HepG2 (cell line): ENCODE measurements at regions of chr14 and their contacts with region 1.

Region 1: GRCh38 chr14:90383075-90383730 is 13.6 kb upstream of the CALM1 start:
- DNase-seq: peak; percentile 98
- ATAC-seq: peak; percentile 92
- H3K4me3 ChIP-seq: peak overlapping the region; percentile 72 to 79 (median 74)
- H3K27ac ChIP-seq: peak overlapping the region; percentile 96
- H3K4me1 ChIP-seq: peaks cover 41% of the 10 kb centered on the region
- H3K27me3 ChIP-seq: no peaks in the 10 kb centered on the region; a peak in 1 of 5 replicates
- CTCF ChIP-seq: peak; percentile 53
- EP300 ChIP-seq: peak; percentile 21 to 25; a peak in 1 of 4 replicates
- POLR2A ChIP-seq: peak; percentile 85 to 94
- RAD21 ChIP-seq: no peak

Region 2: GRCh38 chr14:89954070-89955028 is 428.9 kb before region 1 on chr14 and contains the start of gene EFCAB11:
- CTCF ChIA-PET with region 1: no interaction called
- POLR2A ChIA-PET with region 1: no interaction called
- in situ Hi-C with region 1: no loop called
- intact Hi-C with region 1: loop called (anchors 2 kb)
- DNase-seq: peak; percentile 98
- ATAC-seq: peak; percentile 89
- H3K4me3 ChIP-seq: peak within 1 kb of the TSS; percentile 72 to 95 (median 81)
- H3K27ac ChIP-seq: peak within 1 kb of the TSS; percentile 85
- H3K4me1 ChIP-seq: peaks cover 26% of the 10 kb centered on the region
- H3K27me3 ChIP-seq: no peaks in the 10 kb centered on the region; a peak in 1 of 5 replicates
- CTCF ChIP-seq: no peak
- EP300 ChIP-seq: no peak
- POLR2A ChIP-seq: peak; percentile 87 to 93
- RAD21 ChIP-seq: no peak
- total RNA-seq, gene EFCAB11: 31.5 and 46.5 TPM in 2 replicates

Region 3: DNA sequence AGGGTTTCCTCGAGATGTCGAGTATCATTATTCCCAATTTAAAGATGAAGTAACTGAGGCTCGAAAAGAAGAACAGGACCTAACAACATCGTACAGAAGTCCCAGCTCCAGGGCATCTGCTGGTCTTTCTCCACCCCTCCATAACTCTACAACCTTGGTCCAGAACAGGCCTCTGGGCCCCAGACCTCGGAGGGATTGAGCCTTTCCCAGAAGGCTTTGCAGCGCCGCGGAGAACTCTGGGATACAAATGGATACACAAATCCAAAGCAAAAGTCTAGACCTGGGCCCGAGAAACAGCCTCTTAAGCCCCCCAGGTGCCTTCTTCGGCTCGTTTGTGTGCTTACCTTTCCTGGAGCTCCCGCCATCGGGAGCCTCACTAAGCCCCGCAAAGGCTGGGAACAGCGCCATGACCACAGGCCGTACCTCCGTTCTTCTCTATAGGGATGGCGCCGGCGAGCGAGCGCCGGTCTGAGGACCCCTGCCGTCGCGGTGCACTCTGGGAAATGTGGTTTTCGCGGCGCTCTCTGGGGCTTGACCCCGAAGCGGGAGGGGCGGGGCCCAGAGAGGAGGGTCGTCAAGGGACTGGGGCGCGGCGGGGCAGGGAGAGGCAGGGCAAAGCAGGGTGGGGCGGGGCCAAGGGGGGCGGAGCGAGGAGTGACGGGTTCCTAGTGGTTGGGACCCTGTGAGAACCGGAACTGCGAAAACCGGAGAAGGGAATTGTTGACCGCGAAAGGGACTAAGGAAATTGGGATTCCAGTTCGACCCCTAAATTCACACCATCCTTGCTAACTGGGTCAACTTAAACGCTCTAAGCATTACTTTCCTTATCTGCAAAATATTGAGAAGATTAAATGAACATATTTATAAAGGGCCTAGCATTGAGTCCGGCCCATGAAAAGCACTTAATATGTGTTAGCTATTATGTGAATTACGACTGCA is 51.4 kb before region 1 on chr14 and contains the start of gene NRDE2:
- CTCF ChIA-PET with region 1: no interaction called
- POLR2A ChIA-PET with region 1: interaction called, 5 read pairs
- in situ Hi-C with region 1: no loop called
- intact Hi-C with region 1: loop called (anchors 1 kb)
- DNase-seq: peak; percentile 94
- ATAC-seq: peak; percentile 96
- H3K4me3 ChIP-seq: peak within 1 kb of the TSS; percentile 62 to 93 (median 75)
- H3K27ac ChIP-seq: peak within 1 kb of the TSS; percentile 73
- H3K4me1 ChIP-seq: peaks cover 20% of the 10 kb centered on the region
- H3K27me3 ChIP-seq: no peaks in the 10 kb centered on the region
- CTCF ChIP-seq: peak; percentile 24; the same call in 1 of the 2 replicates
- EP300 ChIP-seq: peak in 1 of 2 experiments; percentile 2; a peak in 1 of 4 replicates
- POLR2A ChIP-seq: peak; percentile 76 to 83
- RAD21 ChIP-seq: no peak; the same call in 1 of the 2 replicates
- total RNA-seq, gene NRDE2: 12.5 and 16.9 TPM in 2 replicates

Region 4: GRCh38 chr14:90368946-90369721 is 14.1 kb before region 1 on chr14:
- CTCF ChIA-PET with region 1: no interaction called
- POLR2A ChIA-PET with region 1: interaction called, 6 read pairs
- in situ Hi-C with region 1: no loop called
- intact Hi-C with region 1: loop called (anchors 2 kb)
- DNase-seq: peak; percentile 73
- ATAC-seq: peak; percentile 90
- H3K4me3 ChIP-seq: no peak overlapping the region
- H3K27ac ChIP-seq: no peak overlapping the region
- H3K4me1 ChIP-seq: peaks cover 27% of the 10 kb centered on the region
- H3K27me3 ChIP-seq: no peaks in the 10 kb centered on the region
- CTCF ChIP-seq: peak; percentile 38
- EP300 ChIP-seq: no peak
- POLR2A ChIP-seq: no peak
- RAD21 ChIP-seq: no peak